Activated naive CD4-positive, alpha-beta T cell treated with anti-CD3 and anti-CD28 coated beads, Interleukin-2, amount 10 ng/mL, durations not matched to agents 7 days and 5 days (primary cell): ENCODE measurements at regions of chr10 and their contacts with region 1.

Region 1: DNA sequence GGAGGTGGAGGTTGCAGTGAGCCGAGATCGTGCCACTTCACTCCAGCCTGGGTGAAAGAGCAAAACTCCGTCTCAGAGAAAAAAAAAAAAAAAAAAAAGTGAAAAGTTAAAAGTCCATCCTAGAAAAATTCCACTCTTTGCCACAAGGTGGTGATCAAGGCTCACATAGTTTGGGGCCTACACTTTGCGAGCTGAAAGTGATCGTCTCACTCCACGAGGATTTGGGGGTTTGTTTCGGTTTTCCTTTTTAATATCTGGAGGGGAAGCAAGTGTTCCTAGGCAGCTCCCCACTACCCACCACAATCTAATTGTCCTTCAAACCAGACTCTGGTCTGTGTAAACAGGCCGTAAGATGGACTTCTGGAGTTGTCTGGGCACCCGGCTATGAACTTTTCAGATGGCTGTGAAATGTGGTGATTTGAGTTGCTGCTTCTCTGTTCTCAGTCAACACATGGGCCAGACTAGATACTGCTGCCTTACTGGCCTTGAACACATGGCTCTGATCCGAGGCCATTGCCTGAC is 27.1 kb downstream of the PRLHR start:
- DNase-seq: peak; percentile 65
- H3K4me3 Mint-ChIP-seq: no peak overlapping the region
- H3K27ac Mint-ChIP-seq: no peak overlapping the region
- H3K4me1 Mint-ChIP-seq: peaks cover 2% of the 10 kb centered on the region
- H3K27me3 Mint-ChIP-seq: peaks cover 21% of the 10 kb centered on the region

Region 2: GRCh38 chr10:118581361-118581886 is 13.0 kb after region 1 on chr10:
- CTCF ChIA-PET with region 1: interaction called, 10 read pairs
- DNase-seq: no peak
- H3K4me3 Mint-ChIP-seq: no peak overlapping the region
- H3K27ac Mint-ChIP-seq: no peak overlapping the region
- H3K4me1 Mint-ChIP-seq: no peaks in the 10 kb centered on the region
- H3K27me3 Mint-ChIP-seq: no peaks in the 10 kb centered on the region

Region 3: DNA sequence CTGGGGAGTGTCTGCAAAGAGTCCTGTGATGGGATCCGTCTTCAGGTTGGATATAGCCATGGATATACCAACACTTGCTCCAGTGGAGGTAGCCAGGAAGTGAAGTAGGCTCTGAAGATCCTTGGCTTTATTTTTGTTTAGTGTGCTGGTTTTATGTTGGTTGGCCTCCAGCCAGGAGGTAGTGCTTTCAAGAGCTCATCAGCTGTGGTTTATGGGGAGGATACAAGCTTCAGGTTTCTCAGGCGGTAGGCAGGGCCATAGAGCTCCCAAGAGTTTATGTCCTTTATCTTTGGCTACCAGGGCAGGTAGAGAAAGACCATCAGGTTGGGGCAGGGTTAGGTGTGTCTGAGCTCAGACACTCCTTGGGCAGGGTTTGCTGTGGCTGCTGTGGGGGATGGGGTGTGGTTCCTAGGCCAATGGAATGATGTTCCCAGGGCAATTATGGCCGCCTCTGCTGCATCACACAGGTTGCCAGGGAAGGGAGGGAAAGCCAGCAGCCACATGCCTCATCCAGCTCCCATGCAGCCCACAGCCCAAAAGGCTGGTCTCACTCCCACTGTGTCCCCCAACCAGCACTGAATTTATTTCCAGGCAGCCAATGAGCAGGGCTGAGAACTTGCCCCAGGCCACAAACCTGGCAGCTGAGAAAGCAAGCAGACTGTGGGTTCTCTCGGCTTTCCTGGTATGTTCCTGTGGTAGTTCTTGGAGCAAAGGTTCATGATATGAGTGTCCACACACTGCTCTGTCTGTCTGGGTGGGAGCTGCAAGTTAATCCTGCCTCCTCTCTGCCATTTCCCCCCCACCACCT is 94.0 kb after region 1 on chr10:
- CTCF ChIA-PET with region 1: no interaction called
- DNase-seq: no peak
- H3K4me3 Mint-ChIP-seq: no peak overlapping the region
- H3K27ac Mint-ChIP-seq: no peak overlapping the region
- H3K4me1 Mint-ChIP-seq: peaks cover 52% of the 10 kb centered on the region
- H3K27me3 Mint-ChIP-seq: peaks cover 21% of the 10 kb centered on the region

Region 4: DNA sequence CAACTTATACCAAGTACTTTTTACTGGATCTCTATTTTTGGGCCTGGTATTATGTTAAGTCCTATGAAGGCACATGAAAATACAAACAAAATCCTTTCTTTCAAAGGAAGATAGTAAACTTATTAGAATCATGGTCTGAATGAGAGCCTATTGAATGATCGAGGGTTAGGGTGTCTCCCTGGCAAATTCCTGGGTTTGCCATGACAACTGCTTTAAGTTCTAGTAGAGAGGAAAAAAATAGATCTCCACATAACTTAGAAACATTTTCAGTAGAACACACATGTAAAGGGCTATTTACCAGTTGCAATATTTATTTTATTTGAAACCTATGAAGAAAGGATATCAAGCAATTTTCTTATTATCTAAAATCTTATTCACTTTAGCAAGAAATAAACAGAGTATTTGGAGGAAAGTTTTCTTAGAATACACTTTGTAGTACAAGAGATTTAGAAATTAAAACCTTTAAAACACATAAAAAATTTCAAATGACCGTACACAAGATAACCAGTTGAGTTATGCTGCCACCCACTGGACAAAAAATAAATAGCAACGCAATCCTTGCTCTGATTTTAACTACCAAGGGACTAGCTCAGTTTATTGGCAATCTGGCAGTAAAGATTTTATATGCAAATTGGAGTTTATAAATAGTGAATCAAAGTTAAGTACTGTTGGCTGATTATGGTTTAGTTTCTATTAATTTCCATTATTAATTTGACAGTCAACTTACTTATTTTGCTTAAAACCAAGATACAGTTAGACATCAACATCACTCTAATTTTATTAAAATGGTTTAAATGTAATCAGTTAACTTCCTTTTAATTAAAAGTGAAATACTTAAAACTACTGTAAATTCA is 152.5 kb after region 1 on chr10:
- CTCF ChIA-PET with region 1: interaction called, 75 read pairs
- DNase-seq: peak; percentile 73
- H3K4me3 Mint-ChIP-seq: no peak overlapping the region
- H3K27ac Mint-ChIP-seq: no peak overlapping the region
- H3K4me1 Mint-ChIP-seq: peaks cover 19% of the 10 kb centered on the region
- H3K27me3 Mint-ChIP-seq: no peaks in the 10 kb centered on the region

Region 5: DNA sequence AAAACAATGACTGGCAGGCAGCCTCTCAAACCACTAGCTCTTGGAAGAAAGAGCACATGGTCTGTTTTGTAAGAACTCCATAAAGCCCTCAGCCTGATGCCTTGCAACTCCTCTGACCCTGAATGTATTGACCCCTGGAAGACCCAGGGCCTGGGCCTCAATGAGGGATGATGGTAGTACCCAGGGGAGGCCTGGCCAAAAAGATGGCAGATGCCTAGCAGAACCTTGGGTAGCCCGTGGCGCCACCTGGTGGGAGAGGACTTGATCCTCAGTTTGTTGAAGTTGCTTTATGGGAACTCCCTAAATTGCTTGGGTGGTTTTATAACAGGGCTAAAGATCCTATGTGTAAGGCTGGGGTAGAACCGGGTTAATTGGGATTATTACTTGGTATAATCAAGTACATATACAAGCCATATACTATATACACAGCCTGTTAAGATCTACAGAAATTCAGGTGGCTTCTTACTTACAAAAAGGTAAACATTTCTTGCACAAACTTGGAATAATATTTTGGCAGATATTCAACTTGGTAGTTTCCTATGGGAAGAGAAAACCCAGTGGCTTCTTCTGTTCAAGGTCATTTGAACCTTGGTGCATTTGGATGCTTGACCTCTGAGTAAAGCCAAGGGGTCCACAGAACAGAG is 282.2 kb after region 1 on chr10:
- CTCF ChIA-PET with region 1: interaction called, 20 read pairs
- DNase-seq: peak; percentile 82
- H3K4me3 Mint-ChIP-seq: no peak overlapping the region
- H3K27ac Mint-ChIP-seq: no peak overlapping the region
- H3K4me1 Mint-ChIP-seq: no peaks in the 10 kb centered on the region
- H3K27me3 Mint-ChIP-seq: peaks cover 3% of the 10 kb centered on the region